ENCODE measurements at regions of chr10 and their contacts with region 1.

Region 1: GRCh38 chr10:104209575-104210198 is 22.5 kb downstream of the CFAP43 start:
- DNase-seq: peak in 3 of 5 donors; percentile 52 to 70 (median 62)
- H3K4me3 ChIP-seq: no peak overlapping the region
- H3K27ac ChIP-seq: no peak overlapping the region
- H3K4me1 ChIP-seq: no peaks in the 10 kb centered on the region
- H3K27me3 ChIP-seq: no peaks in the 10 kb centered on the region
- CTCF ChIP-seq: peak; percentile 34

Region 2: DNA sequence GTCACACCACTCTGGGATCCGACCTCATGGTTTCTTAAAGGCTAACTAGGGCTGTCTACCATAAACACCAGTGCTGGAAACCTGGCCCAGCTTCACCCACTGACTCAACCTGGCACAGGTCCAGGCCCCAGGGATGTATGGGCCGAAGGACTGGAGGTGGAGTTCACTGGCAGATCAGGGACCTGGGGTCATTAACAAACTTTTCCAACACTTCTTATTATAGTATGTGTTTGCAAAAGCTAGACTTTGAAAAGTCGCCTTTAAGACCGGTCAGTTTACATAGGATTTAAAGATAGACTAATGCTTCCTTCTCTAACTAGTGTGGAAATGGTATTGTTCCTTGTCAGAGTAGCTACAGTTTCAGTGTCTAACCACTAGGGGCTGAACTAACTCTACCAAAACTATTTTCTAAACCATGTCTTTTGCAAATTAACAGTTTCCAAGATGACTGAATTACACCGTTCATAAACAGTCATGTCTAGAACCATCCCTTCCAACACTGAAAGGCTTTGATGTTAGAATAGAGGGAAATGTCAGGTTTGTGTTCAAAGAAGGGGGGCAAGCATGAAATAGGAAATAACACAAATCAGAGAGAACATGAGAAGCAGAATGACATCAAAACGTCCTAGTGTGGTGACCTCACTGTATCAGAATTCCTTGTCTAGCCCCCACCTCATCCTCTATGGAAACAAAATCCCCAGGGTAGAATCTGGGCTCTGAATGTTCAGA is 321.4 kb before region 1 on chr10:
- intact Hi-C with region 1: loop called (anchors 10 kb)
- DNase-seq: peak in 4 of 5 donors; percentile 37 to 87 (median 83)
- H3K4me3 ChIP-seq: no peak overlapping the region
- H3K27ac ChIP-seq: peak overlapping the region in 1 of 2 donors; percentile 51
- H3K4me1 ChIP-seq: peaks cover 2 to 8% (median 5%) of the 10 kb centered on the region in 3 donors
- H3K27me3 ChIP-seq: no peaks in the 10 kb centered on the region
- CTCF ChIP-seq: peak; percentile 90